ENCODE measurements at regions of chr6 and their contacts with region 1.

Region 1: DNA sequence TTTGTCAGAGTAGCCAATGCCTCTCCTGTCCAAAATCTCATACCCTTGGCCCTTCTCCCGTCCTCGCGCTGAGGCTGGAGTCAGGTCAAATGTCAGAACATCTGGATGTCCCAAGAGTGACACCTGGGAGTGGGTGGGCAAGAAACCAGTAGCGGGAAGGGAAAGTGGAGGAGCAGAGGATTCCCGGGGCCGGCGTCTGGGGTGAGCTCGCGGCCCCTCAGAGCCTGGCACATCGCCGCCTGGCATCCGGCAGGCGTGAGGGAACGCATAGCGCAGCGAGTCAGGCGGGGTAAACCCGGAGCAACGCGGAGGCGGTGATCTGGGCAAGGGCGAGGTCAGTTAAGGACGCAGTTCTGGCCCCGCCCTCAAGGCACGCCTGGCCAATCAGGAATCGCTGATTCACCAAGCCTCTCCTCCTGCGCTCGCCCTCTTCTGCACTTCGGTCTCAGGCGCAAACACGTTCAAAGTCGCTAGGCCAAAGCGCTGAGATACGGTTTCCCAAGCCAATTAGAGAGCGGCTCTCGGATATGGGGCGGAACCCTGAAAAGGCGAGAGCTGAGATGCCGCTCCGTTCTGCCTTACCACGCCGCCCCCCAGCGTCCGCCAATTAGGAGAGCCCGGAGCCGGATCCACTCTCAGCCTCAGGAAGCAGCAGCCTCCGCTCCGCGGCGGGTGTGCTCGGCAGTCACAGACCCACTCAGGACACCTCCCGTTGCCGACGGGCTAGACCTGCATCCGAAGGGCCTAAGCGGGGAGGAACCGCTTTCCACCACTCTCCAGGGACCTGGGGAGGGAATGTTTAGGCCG is 22.5 kb downstream of the VPS52 start:
- H3K4me3 ChIP-seq: peak overlapping the region; percentile 62
- H3K27ac ChIP-seq: peak overlapping the region; percentile 88
- H3K4me1 ChIP-seq: peaks cover 12% of the 10 kb centered on the region
- CTCF ChIP-seq: 0 out of 2 replicates have a peak, but pooled peaks have one; percentile 35

Region 2: GRCh38 chr6:32845384-32845884 is 403.7 kb before region 1 on chr6:
- CTCF ChIA-PET with region 1: no interaction called
- POLR2A ChIA-PET with region 1: no interaction called
- H3K4me3 ChIP-seq: no peak overlapping the region
- H3K27ac ChIP-seq: no peak overlapping the region
- H3K4me1 ChIP-seq: no peaks in the 10 kb centered on the region
- CTCF ChIP-seq: no peak

Region 3: DNA sequence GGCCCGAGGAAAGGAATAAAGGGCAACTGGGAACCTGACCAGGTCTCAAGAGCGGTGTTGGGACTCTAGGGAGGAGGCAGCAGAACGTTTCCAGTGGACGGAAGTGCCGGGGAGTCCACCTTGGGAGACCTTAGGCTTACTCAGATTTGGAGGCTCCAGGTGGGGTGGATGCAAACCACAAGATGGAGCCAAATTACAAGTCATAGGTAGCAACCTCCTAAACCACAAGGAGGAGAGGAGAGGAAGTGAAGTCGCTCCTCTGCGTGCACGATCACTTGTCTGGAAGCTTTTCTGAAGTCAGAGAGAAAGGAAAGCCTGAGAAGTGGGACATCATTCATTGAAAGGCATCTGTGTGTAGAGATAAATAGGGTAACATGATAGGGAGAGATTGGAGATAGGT is 249.1 kb before region 1 on chr6:
- CTCF ChIA-PET with region 1: interaction called, 21 read pairs
- POLR2A ChIA-PET with region 1: no interaction called
- H3K4me3 ChIP-seq: no peak overlapping the region
- H3K27ac ChIP-seq: no peak overlapping the region
- H3K4me1 ChIP-seq: no peaks in the 10 kb centered on the region
- CTCF ChIP-seq: peak; percentile 74

Region 4: DNA sequence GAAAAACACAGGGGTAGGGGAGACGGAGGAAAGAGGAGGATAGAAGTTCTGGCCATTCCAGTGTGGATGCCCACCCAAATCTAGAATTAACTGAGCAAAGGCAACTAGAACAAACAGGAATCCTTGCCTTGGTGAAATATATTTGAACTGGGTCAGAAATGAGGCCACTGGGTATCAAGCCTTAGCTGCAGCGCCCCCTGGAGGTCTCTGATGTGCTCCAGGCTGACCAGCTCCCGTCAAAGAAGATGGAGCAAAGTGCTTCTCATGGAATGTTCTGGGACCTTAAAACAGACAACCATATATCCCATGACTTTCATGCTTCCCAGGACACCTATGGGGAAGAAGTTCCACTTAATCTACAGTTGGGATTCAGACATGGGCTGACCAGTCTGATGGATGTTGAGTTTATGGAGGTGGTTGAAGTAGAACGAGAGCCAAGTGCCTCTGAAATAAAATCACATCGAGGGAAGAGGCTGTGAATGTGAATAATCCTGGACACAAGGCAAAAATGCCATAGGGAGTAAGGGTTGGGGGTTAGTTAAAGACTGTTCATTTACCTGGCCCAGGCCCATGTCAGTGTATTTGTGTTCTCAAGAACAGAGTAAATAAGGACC is 122.9 kb before region 1 on chr6:
- CTCF ChIA-PET with region 1: interaction called, 76 read pairs
- POLR2A ChIA-PET with region 1: interaction called, 3 read pairs
- H3K4me3 ChIP-seq: no peak overlapping the region
- H3K27ac ChIP-seq: no peak overlapping the region
- H3K4me1 ChIP-seq: no peaks in the 10 kb centered on the region
- CTCF ChIP-seq: no peak

Region 5: GRCh38 chr6:33190504-33191107 is 58.5 kb before region 1 on chr6:
- CTCF ChIA-PET with region 1: interaction called, 11 read pairs
- POLR2A ChIA-PET with region 1: interaction called, 5 read pairs
- H3K4me3 ChIP-seq: no peak overlapping the region
- H3K27ac ChIP-seq: no peak overlapping the region
- H3K4me1 ChIP-seq: peaks cover 3% of the 10 kb centered on the region; the same call in 1 of the 2 replicates
- CTCF ChIP-seq: no peak

Region 6: DNA sequence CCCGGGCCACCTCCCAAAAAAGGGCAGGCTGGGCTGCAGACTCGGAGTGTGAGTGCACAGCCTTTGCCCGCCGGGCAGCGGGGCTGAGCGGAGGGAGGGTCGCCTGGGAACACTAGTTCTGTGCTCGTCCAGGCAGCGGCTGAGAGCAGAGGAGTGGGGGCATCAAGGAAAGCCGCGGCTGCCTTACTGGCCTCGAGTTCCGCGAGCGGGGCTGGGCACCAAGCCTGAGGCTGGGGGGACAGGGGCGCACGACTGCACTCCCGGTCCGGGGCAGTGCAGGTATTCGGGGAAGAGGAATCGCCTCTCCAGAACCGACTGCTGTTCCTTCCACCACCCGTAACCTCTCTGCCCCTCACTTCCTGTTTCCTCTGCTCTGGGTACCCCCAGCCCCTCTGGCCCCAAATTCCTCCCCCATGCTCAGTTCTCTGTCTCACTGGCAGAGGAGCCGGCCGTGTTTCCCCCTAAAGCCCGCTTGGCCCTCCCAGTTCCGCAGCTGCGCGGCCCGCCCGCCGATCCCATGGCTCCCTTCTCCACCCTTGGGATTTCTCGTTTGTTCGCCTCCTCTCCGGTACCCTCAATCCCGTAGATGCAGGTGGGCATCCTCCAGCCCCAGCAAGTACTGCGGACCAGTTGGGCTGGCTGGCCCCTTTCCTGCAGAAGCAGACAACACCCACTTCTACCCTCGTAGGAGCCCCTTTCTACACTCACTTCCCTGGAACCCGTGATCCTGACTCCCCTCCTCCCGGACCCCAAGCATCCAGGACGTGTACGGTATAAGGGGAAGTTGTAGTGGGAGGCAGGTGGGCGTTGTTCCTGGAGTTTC is 35.8 kb before region 1 on chr6:
- CTCF ChIA-PET with region 1: interaction called, 30 read pairs
- POLR2A ChIA-PET with region 1: interaction called, 25 read pairs
- H3K4me3 ChIP-seq: peak overlapping the region; percentile 38
- H3K27ac ChIP-seq: no peak overlapping the region
- H3K4me1 ChIP-seq: peaks cover 8% of the 10 kb centered on the region
- CTCF ChIP-seq: no peak

Region 7: GRCh38 chr6:33271458-33272274 is 22.5 kb after region 1 on chr6 and contains the starts of genes RPS18 and VPS52:
- CTCF ChIA-PET with region 1: interaction called, 8 read pairs
- POLR2A ChIA-PET with region 1: interaction called, 65 read pairs
- H3K4me3 ChIP-seq: peak within 1 kb of the TSS; percentile 77
- H3K27ac ChIP-seq: peak within 1 kb of the TSS; percentile 99
- H3K4me1 ChIP-seq: peaks cover 27% of the 10 kb centered on the region
- CTCF ChIP-seq: peak; percentile 49; the same call in 1 of the 2 replicates

Region 8: DNA sequence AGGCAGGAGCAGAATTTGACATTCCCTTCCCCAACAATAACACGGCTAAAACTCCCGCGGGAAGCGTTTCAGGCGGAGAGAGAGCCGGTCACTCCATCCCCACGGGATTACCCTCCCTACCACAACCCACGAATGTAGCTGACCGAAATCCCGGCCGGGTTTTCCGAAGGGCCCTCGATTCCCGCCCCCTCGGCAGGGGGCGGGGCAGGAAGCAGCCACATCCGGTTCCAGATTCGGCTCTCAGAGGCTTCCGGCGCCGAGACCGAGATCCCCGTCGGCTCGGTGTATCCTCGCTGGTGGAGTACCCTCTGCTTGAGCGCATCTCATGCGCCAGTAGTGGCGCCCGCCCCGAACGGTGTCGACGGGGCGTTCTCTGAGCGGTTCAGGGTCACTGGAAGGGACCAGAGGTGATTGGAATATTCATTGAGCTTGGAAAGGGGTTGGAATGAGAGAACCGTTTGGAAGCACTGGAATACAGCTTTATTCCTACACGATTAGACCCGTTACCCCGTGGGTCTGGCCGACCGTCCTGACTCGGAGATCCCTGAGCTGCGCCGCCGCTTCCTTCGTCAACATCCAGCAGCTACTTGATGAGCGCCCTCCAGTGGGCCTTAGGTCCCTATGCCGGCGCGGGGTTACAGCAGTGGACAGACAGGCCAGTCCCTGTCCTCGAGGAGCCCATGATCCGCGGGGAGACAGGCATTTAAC is 50.3 kb after region 1 on chr6:
- CTCF ChIA-PET with region 1: interaction called, 3 read pairs
- POLR2A ChIA-PET with region 1: interaction called, 12 read pairs
- H3K4me3 ChIP-seq: peak overlapping the region; percentile 74
- H3K27ac ChIP-seq: peak overlapping the region; percentile 91
- H3K4me1 ChIP-seq: no peaks in the 10 kb centered on the region
- CTCF ChIP-seq: peak; percentile 90

Region 9: GRCh38 chr6:33983105-33983716 is 734.1 kb after region 1 on chr6:
- CTCF ChIA-PET with region 1: no interaction called
- POLR2A ChIA-PET with region 1: no interaction called
- H3K4me3 ChIP-seq: no peak overlapping the region
- H3K27ac ChIP-seq: no peak overlapping the region
- H3K4me1 ChIP-seq: 0 out of 2 replicates have a peak, but pooled peaks cover 3% of the 10 kb centered on the region
- CTCF ChIP-seq: no peak